CD8-positive, alpha-beta memory T cell (primary cell): ENCODE measurements at regions of chr17 and their contacts with region 1.

Region 1: GRCh38 chr17:81222906-81223761 is at the start of gene CEP131:
- DNase-seq: peak; percentile 97 to 99 (median 99)
- H3K4me3 ChIP-seq: peak within 1 kb of the TSS; percentile 71
- H3K4me3 Mint-ChIP-seq: peak within 1 kb of the TSS; percentile 72 to 90 (median 80)
- H3K27ac ChIP-seq: peak within 1 kb of the TSS; percentile 38
- H3K27ac Mint-ChIP-seq: peak within 1 kb of the TSS in 5 of 8 donors; percentile 19 to 90 (median 33)
- H3K4me1 ChIP-seq: peaks cover 18% of the 10 kb centered on the region
- H3K4me1 Mint-ChIP-seq: peaks cover 14 to 22% (median 19%) of the 10 kb centered on the region in 3 donors
- H3K27me3 ChIP-seq: no peaks in the 10 kb centered on the region
- H3K27me3 Mint-ChIP-seq: peaks cover 0 to 3% of the 10 kb centered on the region in 2 donors
- total RNA-seq, gene CEP131: 13.2 to 13.3 TPM

Region 2: DNA sequence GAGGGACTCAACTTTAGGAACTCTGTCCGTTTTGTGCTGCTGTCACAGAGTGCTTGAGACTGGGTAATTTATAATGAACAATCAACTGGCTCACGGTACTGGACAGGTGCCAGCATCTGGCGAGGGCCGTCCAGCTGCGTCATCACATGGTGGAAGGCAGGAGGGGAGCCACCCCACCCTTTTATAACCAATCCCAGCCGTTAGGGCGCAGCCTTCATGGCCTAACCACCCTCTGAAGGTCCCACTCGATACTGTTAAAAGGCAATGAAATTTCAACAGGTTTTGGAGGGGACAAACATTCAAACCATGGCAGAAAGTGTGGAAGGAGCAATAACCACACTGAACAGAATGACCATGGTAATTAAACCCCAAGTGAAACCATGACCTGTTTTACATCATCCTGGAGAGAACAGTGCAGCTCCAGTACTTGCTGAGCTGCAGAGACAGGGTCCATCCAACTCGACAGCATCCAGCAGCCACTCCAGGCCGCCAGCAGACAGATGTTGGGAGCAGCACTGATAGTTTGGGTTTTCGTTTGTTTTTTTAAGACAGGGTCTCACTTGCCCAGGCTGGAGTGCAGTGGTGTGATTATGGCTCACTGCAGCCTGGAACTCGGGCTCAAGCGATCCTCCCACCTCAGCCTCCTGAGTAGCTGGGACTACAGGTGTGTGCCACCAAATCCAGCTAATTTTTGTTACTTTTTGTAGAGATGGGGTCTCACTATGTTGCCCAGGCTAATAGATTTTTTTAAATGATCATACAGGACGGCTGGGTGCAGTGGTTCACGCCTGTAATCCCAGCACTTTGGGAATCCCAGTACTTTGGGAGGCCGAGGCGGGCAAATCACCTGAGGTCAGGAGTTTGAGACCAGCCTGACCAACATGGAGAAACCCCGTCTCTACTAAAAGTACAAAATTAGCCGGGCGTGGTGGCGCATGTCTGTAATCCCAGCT is 220.4 kb before region 1 on chr17:
- CTCF ChIA-PET with region 1: no interaction called
- POLR2A ChIA-PET with region 1: no interaction called
- DNase-seq: no peak
- H3K4me3 ChIP-seq: no peak overlapping the region
- H3K4me3 Mint-ChIP-seq: peak overlapping the region in 6 of 7 donors; percentile 20 to 66 (median 50)
- H3K27ac ChIP-seq: no peak overlapping the region
- H3K27ac Mint-ChIP-seq: peak overlapping the region in 1 of 8 donors; percentile 68
- H3K4me1 ChIP-seq: peaks cover 12% of the 10 kb centered on the region
- H3K4me1 Mint-ChIP-seq: peaks cover 12 to 24% (median 19%) of the 10 kb centered on the region in 3 donors
- H3K27me3 ChIP-seq: peaks cover 10% of the 10 kb centered on the region
- H3K27me3 Mint-ChIP-seq: peaks cover 24 to 28% of the 10 kb centered on the region in 2 donors

Region 3: GRCh38 chr17:81142301-81143199 is 80.6 kb before region 1 on chr17:
- CTCF ChIA-PET with region 1: no interaction called
- POLR2A ChIA-PET with region 1: no interaction called
- DNase-seq: peak; percentile 28 to 64 (median 43)
- H3K4me3 ChIP-seq: no peak overlapping the region
- H3K4me3 Mint-ChIP-seq: no peak overlapping the region
- H3K27ac ChIP-seq: no peak overlapping the region
- H3K27ac Mint-ChIP-seq: no peak overlapping the region
- H3K4me1 ChIP-seq: no peaks in the 10 kb centered on the region
- H3K4me1 Mint-ChIP-seq: no peaks in the 10 kb centered on the region
- H3K27me3 ChIP-seq: no peaks in the 10 kb centered on the region
- H3K27me3 Mint-ChIP-seq: peaks cover 0 to 7% of the 10 kb centered on the region in 2 donors

Region 4: DNA sequence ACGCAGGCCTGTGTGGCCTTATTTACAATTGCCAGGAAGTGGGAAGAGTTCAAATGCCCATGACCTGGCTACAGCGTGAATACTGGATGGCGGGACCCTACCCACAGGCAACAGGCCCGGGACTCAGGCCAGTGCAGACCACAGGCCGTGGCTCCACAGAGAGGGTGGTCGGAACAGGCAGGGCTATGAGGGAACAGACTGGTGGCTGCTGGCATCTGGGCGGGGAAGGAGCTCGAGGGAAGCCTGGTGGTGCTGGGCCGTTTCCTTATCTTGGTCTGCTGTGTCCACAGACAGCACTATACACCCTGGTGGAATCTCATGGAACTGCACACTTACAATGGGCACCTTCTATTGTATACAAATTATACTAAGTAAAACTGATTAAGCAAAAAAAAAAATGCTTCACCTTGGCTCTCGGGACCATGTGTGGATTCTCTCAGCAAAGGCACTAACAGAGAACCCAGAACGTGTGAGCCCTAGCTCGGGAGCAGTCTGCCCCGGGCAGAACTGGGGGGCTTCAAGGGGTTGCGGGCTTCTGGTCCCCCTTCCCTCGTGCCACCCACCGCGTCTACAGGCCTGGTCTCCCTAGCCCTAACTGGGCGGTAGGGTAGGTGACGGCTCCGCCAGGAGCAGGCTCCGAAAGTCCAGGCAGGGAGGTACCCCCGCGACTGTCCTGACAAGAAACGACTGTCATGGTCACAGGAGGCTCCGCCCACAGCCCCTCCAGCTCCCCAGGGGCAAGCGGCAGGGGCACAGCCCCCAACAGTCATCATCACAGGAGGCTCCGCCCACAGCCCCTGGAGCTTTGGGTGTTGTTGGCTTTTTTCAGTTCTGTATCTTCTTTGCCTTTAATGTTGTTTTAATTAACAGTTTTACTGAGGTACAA is 22.2 kb before region 1 on chr17:
- CTCF ChIA-PET with region 1: no interaction called
- POLR2A ChIA-PET with region 1: no interaction called
- DNase-seq: no peak
- H3K4me3 ChIP-seq: no peak overlapping the region
- H3K4me3 Mint-ChIP-seq: no peak overlapping the region
- H3K27ac ChIP-seq: no peak overlapping the region
- H3K27ac Mint-ChIP-seq: no peak overlapping the region
- H3K4me1 ChIP-seq: no peaks in the 10 kb centered on the region
- H3K4me1 Mint-ChIP-seq: no peaks in the 10 kb centered on the region
- H3K27me3 ChIP-seq: no peaks in the 10 kb centered on the region
- H3K27me3 Mint-ChIP-seq: no peaks in the 10 kb centered on the region

Region 5: DNA sequence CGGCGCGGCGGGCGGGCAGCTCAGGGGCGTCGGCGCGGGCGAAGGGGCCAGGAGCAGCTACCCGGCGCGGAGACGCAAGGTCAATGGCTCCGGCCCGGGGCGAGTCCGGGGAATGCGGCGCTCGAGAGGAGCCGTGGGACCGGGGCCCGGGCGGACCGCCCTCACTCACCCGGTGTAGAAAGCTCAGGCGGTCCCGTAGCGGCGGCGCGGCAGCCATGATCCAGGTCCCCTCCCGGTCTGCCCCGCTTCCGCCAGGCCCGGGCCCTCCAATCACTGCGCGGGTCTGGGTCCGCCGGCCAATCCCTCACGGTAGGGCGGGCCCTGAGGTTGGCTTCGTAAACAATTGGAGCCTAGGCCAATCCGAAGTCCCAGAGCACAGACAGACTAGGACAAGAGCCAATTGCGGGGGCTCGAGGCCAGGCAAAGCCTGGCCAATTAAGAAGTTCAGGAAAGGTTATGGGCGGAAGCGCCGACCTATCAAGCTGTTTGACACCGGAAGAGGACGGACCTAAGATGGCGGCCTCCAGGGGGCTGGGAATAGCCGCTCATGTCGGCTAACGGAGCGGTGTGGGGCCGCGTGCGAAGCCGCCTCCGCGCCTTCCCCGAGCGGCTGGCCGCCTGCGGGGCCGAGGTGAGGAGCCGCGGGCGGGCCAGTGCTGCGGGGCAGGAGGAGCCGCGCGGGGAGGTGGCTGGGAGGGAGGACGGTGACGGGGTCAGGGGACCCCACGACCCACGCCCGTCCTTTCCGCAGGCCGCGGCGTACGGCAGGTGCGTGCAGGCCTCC is 15.9 kb after region 1 on chr17 and contains the starts of genes NDUFAF8 and TEPSIN:
- CTCF ChIA-PET with region 1: interaction called, 3 read pairs
- POLR2A ChIA-PET with region 1: interaction called, 44 read pairs
- DNase-seq: peak; percentile 93 to 98 (median 96)
- H3K4me3 ChIP-seq: peak within 1 kb of the TSS; percentile 86
- H3K4me3 Mint-ChIP-seq: peak within 1 kb of the TSS; percentile 90 to 99 (median 94)
- H3K27ac ChIP-seq: peak within 1 kb of the TSS; percentile 61
- H3K27ac Mint-ChIP-seq: peak within 1 kb of the TSS; percentile 77 to 98 (median 92)
- H3K4me1 ChIP-seq: peaks cover 28% of the 10 kb centered on the region
- H3K4me1 Mint-ChIP-seq: peaks cover 36 to 61% (median 43%) of the 10 kb centered on the region in 3 donors
- H3K27me3 ChIP-seq: no peaks in the 10 kb centered on the region
- H3K27me3 Mint-ChIP-seq: peaks cover 0 to 2% of the 10 kb centered on the region in 2 donors
- total RNA-seq, gene NDUFAF8: 136 to 138 TPM
- total RNA-seq, gene TEPSIN: 41.2 to 44.2 TPM